Caco-2 (cell line): ENCODE measurements at regions of chr15 and their contacts with region 1.

Region 1: DNA sequence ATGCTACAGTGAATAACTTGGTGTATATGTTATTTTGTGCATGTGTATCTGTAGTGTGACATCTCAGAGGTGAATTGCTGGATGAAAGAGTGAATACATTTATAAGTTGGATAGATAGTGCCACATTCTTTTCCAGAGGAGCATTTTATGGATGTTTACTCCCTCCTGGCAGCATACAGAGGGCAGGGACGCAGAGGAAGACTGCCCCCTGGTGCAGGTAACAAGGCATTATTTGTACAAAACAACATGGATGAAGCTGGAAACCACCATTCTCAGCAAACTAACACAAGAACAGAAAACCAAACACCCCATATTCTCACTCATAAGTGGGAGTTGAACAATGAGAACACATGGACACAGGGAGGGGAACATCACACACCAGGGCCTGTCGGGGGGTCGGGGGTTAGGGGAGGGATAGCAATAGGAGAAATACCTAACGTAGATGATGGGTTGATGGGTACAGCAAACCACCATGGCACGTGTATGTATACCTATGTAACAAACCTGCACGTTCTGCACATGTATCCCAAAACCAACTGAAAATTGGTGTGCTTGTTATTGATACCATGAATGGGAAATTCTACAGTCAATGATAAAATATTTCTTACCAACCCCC is 57.9 kb upstream of the CTXND1 start:
- DNase-seq: peak in 1 of 2 experiments; percentile 11
- H3K4me3 ChIP-seq: no peak overlapping the region
- H3K4me3 Mint-ChIP-seq: no peak overlapping the region
- H3K27ac Mint-ChIP-seq: no peak overlapping the region
- H3K4me1 ChIP-seq: no peaks in the 10 kb centered on the region
- H3K4me1 Mint-ChIP-seq: no peaks in the 10 kb centered on the region
- H3K27me3 ChIP-seq: no peaks in the 10 kb centered on the region
- H3K27me3 Mint-ChIP-seq: peaks cover 3% of the 10 kb centered on the region
- CTCF ChIP-seq: peak; percentile 41 to 54

Region 2: GRCh38 chr15:80242132-80242769 is 67.6 kb before region 1 on chr15:
- CTCF ChIA-PET with region 1: no interaction called
- POLR2A ChIA-PET with region 1: no interaction called
- intact Hi-C with region 1: loop called (anchors 2 kb)
- DNase-seq: peak in 1 of 2 experiments; percentile 35
- H3K4me3 ChIP-seq: no peak overlapping the region
- H3K4me3 Mint-ChIP-seq: no peak overlapping the region
- H3K27ac Mint-ChIP-seq: no peak overlapping the region
- H3K4me1 ChIP-seq: peaks cover 3% of the 10 kb centered on the region; the same call in 1 of the 2 replicates
- H3K4me1 Mint-ChIP-seq: peaks cover 6% of the 10 kb centered on the region
- H3K27me3 ChIP-seq: no peaks in the 10 kb centered on the region
- H3K27me3 Mint-ChIP-seq: no peaks in the 10 kb centered on the region
- CTCF ChIP-seq: peak; percentile 34 to 54